HEK293 (cell line): ENCODE measurements at regions of chr1 and their contacts with region 1.

Region 1: GRCh38 chr1:16078925-16079656 is 5.6 kb upstream of the FAM131C start:
- H3K4me3 ChIP-seq: no peak overlapping the region
- H3K27ac ChIP-seq: no peak overlapping the region
- H3K4me1 ChIP-seq: no peaks in the 10 kb centered on the region
- CTCF ChIP-seq: peak; percentile 92

Region 2: DNA sequence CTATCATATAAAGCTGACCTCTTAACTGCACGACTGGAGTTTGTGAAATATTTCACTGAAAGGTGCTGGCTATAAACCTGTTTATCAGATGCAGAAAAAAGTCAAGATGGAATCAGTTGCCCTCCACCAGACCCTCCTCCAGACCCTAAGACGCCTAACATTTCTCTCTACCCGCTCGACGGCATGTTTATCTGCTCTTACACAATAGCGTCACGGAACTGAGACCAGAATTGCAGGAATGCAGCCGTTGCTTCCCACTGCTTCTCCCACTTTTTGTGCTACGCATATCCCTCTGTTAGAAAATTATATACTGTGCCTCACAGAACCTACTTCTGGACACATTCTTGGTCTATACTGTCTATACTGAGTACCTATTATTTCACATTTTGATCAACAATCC is 22.5 kb after region 1 on chr1:
- CTCF ChIA-PET with region 1: interaction called, 22 read pairs
- POLR2A ChIA-PET with region 1: no interaction called
- H3K4me3 ChIP-seq: no peak overlapping the region
- H3K27ac ChIP-seq: no peak overlapping the region
- H3K4me1 ChIP-seq: no peaks in the 10 kb centered on the region
- CTCF ChIP-seq: no peak

Region 3: GRCh38 chr1:16139473-16139962 is 60.4 kb after region 1 on chr1:
- CTCF ChIA-PET with region 1: interaction called, 39 read pairs
- POLR2A ChIA-PET with region 1: no interaction called
- H3K4me3 ChIP-seq: no peak overlapping the region
- H3K27ac ChIP-seq: no peak overlapping the region
- H3K4me1 ChIP-seq: no peaks in the 10 kb centered on the region
- CTCF ChIP-seq: no peak

Region 4: DNA sequence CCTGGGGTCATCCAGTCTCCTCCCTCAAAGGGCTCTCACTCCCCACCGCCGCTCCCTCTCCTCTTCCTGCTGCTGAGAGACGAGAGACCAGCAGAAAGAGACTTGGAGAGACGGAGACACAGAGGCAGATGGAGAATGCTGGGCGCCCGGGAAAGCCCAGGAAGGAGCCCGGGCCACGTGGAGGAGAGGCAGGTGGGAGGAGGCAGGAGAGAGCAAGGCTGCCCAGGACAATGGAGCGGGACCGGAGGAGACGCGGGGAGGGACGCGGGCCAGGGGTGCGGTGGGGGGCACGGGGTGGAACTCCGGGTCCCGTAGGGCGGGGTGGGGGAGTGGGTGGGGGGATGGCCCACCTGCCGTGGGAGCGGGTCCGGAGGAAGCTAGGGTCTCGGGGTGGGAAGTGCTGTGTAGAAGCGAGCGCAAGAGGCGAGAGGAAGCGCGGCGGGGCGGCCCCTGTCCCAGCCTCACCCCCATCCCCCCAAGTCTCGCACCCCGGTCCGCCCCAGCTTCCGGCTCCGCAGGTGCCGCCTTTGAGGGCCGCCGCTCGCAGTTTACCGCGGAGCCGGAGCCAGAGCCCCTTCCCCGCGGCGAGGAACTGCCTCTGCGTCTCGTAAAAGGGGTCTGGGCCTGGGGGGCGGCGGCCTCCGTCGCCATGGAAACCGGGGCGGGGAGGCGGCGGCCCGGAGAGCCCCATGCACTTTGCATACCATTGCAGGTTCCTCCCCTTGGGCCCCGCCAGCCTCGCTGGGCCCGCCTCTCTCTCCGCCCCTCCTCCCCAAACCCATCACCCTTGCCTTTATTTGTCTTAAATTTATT is 88.4 kb after region 1 on chr1:
- CTCF ChIA-PET with region 1: interaction called, 10 read pairs
- POLR2A ChIA-PET with region 1: no interaction called
- H3K4me3 ChIP-seq: peak overlapping the region; percentile 30
- H3K27ac ChIP-seq: no peak overlapping the region
- H3K4me1 ChIP-seq: peaks cover 5% of the 10 kb centered on the region
- CTCF ChIP-seq: no peak

Region 5: DNA sequence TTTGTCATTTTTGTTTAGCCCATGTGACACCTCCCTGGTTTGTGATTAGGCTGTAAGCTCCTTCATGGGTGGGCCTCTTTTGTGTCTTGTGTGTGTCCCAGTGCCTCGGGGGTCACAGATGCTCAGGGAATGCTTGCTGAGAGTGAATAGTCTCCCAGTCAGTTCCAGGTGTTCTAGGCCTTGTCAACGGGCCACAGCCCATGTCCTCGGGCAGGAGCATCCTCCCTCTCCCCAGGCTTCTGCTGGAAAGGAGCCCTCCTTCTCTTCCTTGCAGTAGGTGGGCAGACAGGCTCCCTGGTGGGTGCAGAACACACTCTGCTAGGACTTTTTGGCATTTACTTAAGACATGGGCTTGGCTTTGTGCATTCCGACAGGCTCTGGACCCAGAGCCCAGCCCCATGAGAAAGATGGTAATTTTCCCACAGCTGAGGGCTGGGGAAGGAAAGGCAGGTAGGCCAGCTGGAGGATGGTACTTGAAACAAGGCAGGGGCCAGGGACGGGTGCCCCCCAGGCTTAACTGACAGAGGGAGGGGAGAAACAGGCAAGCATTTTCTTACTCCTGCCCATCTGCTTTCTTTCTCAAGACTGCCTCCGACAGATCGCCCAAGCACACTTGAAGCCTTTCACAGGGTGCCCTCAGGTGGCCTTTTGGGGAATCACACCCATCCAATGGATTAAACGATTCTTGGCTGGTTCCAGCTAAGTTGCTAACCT is 165.0 kb after region 1 on chr1:
- CTCF ChIA-PET with region 1: interaction called, 91 read pairs
- POLR2A ChIA-PET with region 1: no interaction called
- H3K4me3 ChIP-seq: no peak overlapping the region
- H3K27ac ChIP-seq: no peak overlapping the region
- H3K4me1 ChIP-seq: peaks cover 9% of the 10 kb centered on the region
- CTCF ChIP-seq: peak; percentile 77